OCI-LY7 (cell line): ENCODE measurements at regions of chr2 and their contacts with region 1.

Region 1: DNA sequence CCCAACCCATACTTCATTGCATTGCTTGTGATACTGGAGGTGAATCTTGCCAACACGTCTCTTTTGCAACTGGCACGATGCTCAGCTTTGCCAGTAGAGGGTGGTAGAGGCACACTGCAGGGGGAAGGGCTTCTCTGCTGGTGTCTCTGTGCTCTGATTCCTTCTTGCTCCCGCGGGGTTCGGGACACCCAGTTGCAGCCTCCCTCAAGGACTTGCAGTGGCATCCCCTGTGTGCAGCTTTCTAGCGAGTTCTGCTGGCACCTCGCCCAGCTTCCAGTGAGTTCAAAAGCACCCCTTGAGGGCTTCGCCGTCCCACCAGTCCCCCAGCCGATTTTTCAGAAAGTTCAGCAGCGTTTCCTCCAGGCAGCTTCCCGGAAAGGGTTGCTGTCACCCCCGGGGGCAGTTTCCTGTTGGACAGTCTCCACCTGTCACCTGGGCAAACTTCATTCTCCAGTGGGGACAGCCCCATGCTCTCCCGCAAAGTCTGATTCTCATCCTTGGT is 35.3 kb upstream of the EN1 start:
- DNase-seq: peak; percentile 82
- H3K4me3 ChIP-seq: peak overlapping the region; percentile 67
- H3K27ac ChIP-seq: no peak overlapping the region
- H3K4me1 ChIP-seq: peaks cover 9% of the 10 kb centered on the region
- CTCF ChIP-seq: peak; percentile 95

Region 2: GRCh38 chr2:119126650-119127049 is 243.9 kb after region 1 on chr2:
- CTCF ChIA-PET with region 1: interaction called, 3 read pairs
- POLR2A ChIA-PET with region 1: no interaction called
- intact Hi-C with region 1: loop called (anchors 2 kb)
- DNase-seq: peak; percentile 43
- H3K4me3 ChIP-seq: no peak overlapping the region
- H3K27ac ChIP-seq: no peak overlapping the region
- H3K4me1 ChIP-seq: no peaks in the 10 kb centered on the region
- CTCF ChIP-seq: peak; percentile 81

Region 3: GRCh38 chr2:119264781-119265692 is 382.3 kb after region 1 on chr2:
- CTCF ChIA-PET with region 1: no interaction called
- POLR2A ChIA-PET with region 1: no interaction called
- intact Hi-C with region 1: loop called (anchors 1 kb)
- DNase-seq: peak; percentile 61
- H3K4me3 ChIP-seq: no peak overlapping the region
- H3K27ac ChIP-seq: no peak overlapping the region
- H3K4me1 ChIP-seq: no peaks in the 10 kb centered on the region
- CTCF ChIP-seq: peak; percentile 84

Region 4: GRCh38 chr2:119366649-119367471 is 484.1 kb after region 1 on chr2 and contains the starts of genes C2orf76 and DBI:
- CTCF ChIA-PET with region 1: no interaction called
- POLR2A ChIA-PET with region 1: no interaction called
- intact Hi-C with region 1: loop called (anchors 5 kb)
- DNase-seq: peak; percentile 97
- H3K4me3 ChIP-seq: peak within 1 kb of the TSS; percentile 92
- H3K27ac ChIP-seq: peak within 1 kb of the TSS; percentile 77
- H3K4me1 ChIP-seq: peaks cover 39% of the 10 kb centered on the region
- CTCF ChIP-seq: no peak
- total RNA-seq, gene C2orf76: 14.2 and 15.4 TPM in 2 replicates
- total RNA-seq, gene DBI: 293 and 348 TPM in 2 replicates